CD8-positive, alpha-beta T cell (primary cell): ENCODE measurements at regions of chr7 and their contacts with region 1.

Region 1: GRCh38 chr7:43925984-43926797 is at the start of gene UBE2D4:
- DNase-seq: peak; percentile 71 to 93 (median 90)
- ATAC-seq: peak; percentile 88
- H3K4me3 ChIP-seq: peak within 1 kb of the TSS; percentile 52 to 64
- H3K4me3 Mint-ChIP-seq: peak within 1 kb of the TSS; percentile 89
- H3K27ac ChIP-seq: peak within 1 kb of the TSS; percentile 91 to 92
- H3K27ac Mint-ChIP-seq: peak within 1 kb of the TSS; percentile 98
- H3K4me1 ChIP-seq: peaks cover 24% of the 10 kb centered on the region
- H3K4me1 Mint-ChIP-seq: peaks cover 41% of the 10 kb centered on the region
- H3K27me3 ChIP-seq: no peaks in the 10 kb centered on the region
- H3K27me3 Mint-ChIP-seq: no peaks in the 10 kb centered on the region
- CTCF ChIP-seq: no peak
- total RNA-seq, gene UBE2D4: 6.8 to 8.4 TPM

Region 2: DNA sequence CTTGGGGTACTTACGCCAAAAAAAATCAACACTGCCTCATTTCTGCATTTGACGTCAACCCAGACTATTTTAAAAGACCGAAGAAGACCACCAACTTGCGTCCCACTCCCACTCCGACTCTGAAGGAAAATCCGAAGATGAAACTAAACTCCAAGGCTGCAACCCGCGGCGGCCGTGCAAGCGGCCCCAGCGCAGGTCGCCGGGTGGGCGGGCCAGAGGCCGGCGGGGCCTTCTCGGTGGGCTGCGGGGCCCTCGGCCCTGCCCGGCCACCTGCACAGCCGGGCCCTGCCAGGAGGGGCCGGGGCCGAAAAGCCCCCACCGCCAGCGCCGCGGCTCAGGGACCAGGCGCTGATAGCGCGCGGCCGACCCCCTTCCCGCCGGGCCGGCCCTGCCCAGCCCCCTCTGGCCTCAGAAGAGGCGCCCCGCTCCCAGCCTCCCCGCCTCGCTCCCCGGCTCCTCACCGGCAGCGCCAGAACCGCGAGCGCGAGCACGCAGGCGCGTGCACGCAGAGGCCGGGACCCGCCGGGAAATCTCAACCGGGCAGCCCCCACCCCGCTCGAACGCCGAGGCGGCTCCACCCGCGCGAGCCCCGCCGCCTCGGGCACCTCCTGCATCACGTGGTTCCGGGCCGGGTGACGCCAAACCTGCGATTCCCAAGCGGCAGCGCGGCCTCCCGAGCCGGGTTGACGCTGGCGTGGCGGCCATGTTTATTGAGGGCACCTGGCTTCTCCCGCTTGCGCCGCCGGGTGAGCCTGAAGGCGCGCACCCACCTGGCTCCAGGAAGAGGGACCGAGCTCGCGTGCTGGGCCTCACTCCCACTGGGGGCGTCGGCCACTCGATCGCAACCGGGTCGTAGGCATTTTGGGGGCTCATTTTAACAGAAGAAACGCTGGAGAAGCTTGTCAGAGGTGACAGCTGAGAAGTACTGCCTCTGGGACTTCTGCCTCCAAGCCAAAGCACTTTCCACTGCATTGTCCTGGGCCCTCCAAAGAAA is 1014.4 kb before region 1 on chr7 and contains the start of gene C7orf25:
- CTCF ChIA-PET with region 1: no interaction called
- POLR2A ChIA-PET with region 1: no interaction called
- intact Hi-C with region 1: loop called in 1 of 2 experiments (anchors 5 kb)
- DNase-seq: peak; percentile 87 to 97 (median 95)
- ATAC-seq: peak; percentile 92
- H3K4me3 ChIP-seq: peak within 1 kb of the TSS; percentile 51 to 65
- H3K4me3 Mint-ChIP-seq: peak within 1 kb of the TSS; percentile 87
- H3K27ac ChIP-seq: peak within 1 kb of the TSS; percentile 54 to 77
- H3K27ac Mint-ChIP-seq: peak within 1 kb of the TSS; percentile 93
- H3K4me1 ChIP-seq: peaks cover 34% of the 10 kb centered on the region
- H3K4me1 Mint-ChIP-seq: peaks cover 50% of the 10 kb centered on the region
- H3K27me3 ChIP-seq: no peaks in the 10 kb centered on the region
- H3K27me3 Mint-ChIP-seq: no peaks in the 10 kb centered on the region
- CTCF ChIP-seq: no peak
- total RNA-seq, gene C7orf25: 2.1 to 2.2 TPM

Region 3: GRCh38 chr7:43729214-43729923 is 196.8 kb before region 1 on chr7 and contains the start of gene COA1:
- CTCF ChIA-PET with region 1: no interaction called
- POLR2A ChIA-PET with region 1: no interaction called
- intact Hi-C with region 1: loop called (anchors 1 to 10 kb)
- DNase-seq: peak; percentile 61 to 93 (median 81)
- ATAC-seq: peak; percentile 92
- H3K4me3 ChIP-seq: peak within 1 kb of the TSS; percentile 81 to 89
- H3K4me3 Mint-ChIP-seq: peak within 1 kb of the TSS; percentile 93
- H3K27ac ChIP-seq: peak within 1 kb of the TSS; percentile 70 to 74
- H3K27ac Mint-ChIP-seq: peak within 1 kb of the TSS; percentile 90
- H3K4me1 ChIP-seq: peaks cover 31% of the 10 kb centered on the region
- H3K4me1 Mint-ChIP-seq: peaks cover 42% of the 10 kb centered on the region
- H3K27me3 ChIP-seq: no peaks in the 10 kb centered on the region
- H3K27me3 Mint-ChIP-seq: no peaks in the 10 kb centered on the region
- CTCF ChIP-seq: no peak
- total RNA-seq, gene COA1: 95.8 to 96.7 TPM

Region 4: DNA sequence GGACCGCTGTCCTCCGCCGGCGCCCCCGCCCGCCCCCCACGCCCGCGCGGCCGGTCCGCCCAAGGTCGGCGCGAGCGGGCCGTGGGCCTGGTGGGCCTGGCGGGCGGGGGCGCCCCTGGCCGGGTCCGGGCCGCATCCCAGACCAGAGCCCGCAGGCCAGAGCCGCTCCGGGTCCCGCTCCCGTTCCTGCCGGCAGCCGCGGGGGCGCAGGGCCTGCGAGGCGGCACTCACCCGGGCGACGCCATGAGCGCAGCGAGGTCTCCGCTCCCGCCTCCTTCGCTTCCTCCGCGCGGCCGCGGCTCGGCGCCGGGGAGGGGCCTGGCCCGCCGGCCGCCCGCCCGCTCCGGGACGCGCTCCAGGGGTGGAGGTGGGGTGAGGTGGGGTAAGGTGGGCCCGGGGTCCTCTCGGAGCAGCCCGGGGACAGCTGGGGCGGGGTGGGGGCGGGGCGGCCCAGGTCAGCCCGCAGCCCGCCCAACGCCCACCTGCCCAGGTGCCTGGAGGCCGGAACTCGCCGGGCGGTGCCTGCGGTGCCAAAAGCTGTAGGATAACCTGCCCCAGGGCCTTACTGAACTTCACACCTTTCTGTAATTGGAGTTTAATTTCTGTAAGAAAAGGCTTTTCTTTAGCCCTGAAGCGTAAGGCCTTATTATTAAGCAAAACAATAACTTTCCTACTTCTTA is 19.7 kb before region 1 on chr7 and contains the start of gene URGCP:
- CTCF ChIA-PET with region 1: no interaction called
- POLR2A ChIA-PET with region 1: interaction called, 6 read pairs
- intact Hi-C with region 1: loop called (anchors 1 kb)
- DNase-seq: peak; percentile 10 to 74 (median 55)
- ATAC-seq: peak; percentile 91
- H3K4me3 ChIP-seq: peak within 1 kb of the TSS; percentile 60 to 70
- H3K4me3 Mint-ChIP-seq: peak within 1 kb of the TSS; percentile 94
- H3K27ac ChIP-seq: peak within 1 kb of the TSS; percentile 42 to 47
- H3K27ac Mint-ChIP-seq: peak within 1 kb of the TSS; percentile 96
- H3K4me1 ChIP-seq: peaks cover 26% of the 10 kb centered on the region
- H3K4me1 Mint-ChIP-seq: peaks cover 41% of the 10 kb centered on the region
- H3K27me3 ChIP-seq: no peaks in the 10 kb centered on the region
- H3K27me3 Mint-ChIP-seq: no peaks in the 10 kb centered on the region
- CTCF ChIP-seq: no peak
- total RNA-seq, gene URGCP: 24.5 to 25.0 TPM

Region 5: DNA sequence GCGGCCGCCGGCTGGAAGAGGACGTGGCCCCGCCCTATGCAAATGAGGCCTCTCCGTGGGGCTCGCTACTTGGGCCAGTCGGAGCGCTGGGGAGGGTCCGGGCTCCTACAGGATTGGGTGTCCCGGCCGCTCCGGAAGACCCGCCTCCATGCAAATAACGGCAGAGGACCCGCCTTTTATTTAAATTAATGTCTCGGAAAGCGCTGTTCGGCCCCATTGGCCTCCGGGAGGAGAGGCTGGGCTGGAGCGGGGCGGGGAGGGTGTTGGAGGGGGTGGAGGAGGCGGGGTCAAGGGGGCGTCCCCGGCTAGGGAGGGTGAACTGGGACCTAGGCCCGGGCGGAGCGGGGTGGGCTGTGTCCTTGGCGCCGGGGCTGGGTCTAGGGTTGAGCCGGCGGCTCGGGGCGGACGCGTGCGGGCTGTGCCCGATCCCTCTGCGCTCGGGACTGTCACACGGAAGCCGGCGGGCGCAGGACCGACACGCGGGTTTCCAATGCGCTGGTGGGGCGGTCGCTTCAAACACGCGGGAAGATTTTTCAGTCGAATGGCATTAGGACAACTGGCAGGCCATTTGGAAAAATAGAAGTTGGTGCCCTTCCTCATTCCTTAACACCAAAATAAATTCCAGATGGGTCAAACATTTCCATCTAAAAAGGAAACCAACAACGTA is 156.5 kb after region 1 on chr7:
- CTCF ChIA-PET with region 1: no interaction called
- POLR2A ChIA-PET with region 1: no interaction called
- intact Hi-C with region 1: loop called in 1 of 2 experiments (anchors 2 kb)
- DNase-seq: peak; percentile 94 to 100 (median 97)
- ATAC-seq: peak; percentile 93
- H3K4me3 ChIP-seq: peak overlapping the region; percentile 51 to 63
- H3K4me3 Mint-ChIP-seq: peak overlapping the region; percentile 88
- H3K27ac ChIP-seq: peak overlapping the region; percentile 54 to 78
- H3K27ac Mint-ChIP-seq: peak overlapping the region; percentile 82
- H3K4me1 ChIP-seq: peaks cover 26% of the 10 kb centered on the region
- H3K4me1 Mint-ChIP-seq: peaks cover 33% of the 10 kb centered on the region
- H3K27me3 ChIP-seq: no peaks in the 10 kb centered on the region
- H3K27me3 Mint-ChIP-seq: no peaks in the 10 kb centered on the region
- CTCF ChIP-seq: no peak

Region 6: GRCh38 chr7:44112231-44113000 is 186.2 kb after region 1 on chr7:
- CTCF ChIA-PET with region 1: no interaction called
- POLR2A ChIA-PET with region 1: no interaction called
- intact Hi-C with region 1: no loop called
- DNase-seq: no peak
- ATAC-seq: no peak
- H3K4me3 ChIP-seq: no peak overlapping the region
- H3K4me3 Mint-ChIP-seq: no peak overlapping the region
- H3K27ac ChIP-seq: no peak overlapping the region
- H3K27ac Mint-ChIP-seq: no peak overlapping the region
- H3K4me1 ChIP-seq: no peaks in the 10 kb centered on the region
- H3K4me1 Mint-ChIP-seq: no peaks in the 10 kb centered on the region
- H3K27me3 ChIP-seq: no peaks in the 10 kb centered on the region
- H3K27me3 Mint-ChIP-seq: no peaks in the 10 kb centered on the region
- CTCF ChIP-seq: no peak

Region 7: GRCh38 chr7:44200647-44201461 is 274.7 kb after region 1 on chr7 and contains the start of gene YKT6:
- CTCF ChIA-PET with region 1: no interaction called
- POLR2A ChIA-PET with region 1: interaction called, 3 read pairs
- intact Hi-C with region 1: loop called in 1 of 2 experiments (anchors 5 kb)
- DNase-seq: peak; percentile 84 to 98 (median 95)
- ATAC-seq: peak; percentile 98
- H3K4me3 ChIP-seq: peak within 1 kb of the TSS; percentile 72 to 97
- H3K4me3 Mint-ChIP-seq: peak within 1 kb of the TSS; percentile 81
- H3K27ac ChIP-seq: peak within 1 kb of the TSS; percentile 65 to 78
- H3K27ac Mint-ChIP-seq: peak within 1 kb of the TSS; percentile 80
- H3K4me1 ChIP-seq: peaks cover 13% of the 10 kb centered on the region
- H3K4me1 Mint-ChIP-seq: peaks cover 34% of the 10 kb centered on the region
- H3K27me3 ChIP-seq: no peaks in the 10 kb centered on the region
- H3K27me3 Mint-ChIP-seq: peaks cover 5% of the 10 kb centered on the region
- CTCF ChIP-seq: peak; percentile 43
- total RNA-seq, gene YKT6: 111 to 114 TPM